ENCODE measurements at regions of chr11 and their contacts with region 1.

Region 1: DNA sequence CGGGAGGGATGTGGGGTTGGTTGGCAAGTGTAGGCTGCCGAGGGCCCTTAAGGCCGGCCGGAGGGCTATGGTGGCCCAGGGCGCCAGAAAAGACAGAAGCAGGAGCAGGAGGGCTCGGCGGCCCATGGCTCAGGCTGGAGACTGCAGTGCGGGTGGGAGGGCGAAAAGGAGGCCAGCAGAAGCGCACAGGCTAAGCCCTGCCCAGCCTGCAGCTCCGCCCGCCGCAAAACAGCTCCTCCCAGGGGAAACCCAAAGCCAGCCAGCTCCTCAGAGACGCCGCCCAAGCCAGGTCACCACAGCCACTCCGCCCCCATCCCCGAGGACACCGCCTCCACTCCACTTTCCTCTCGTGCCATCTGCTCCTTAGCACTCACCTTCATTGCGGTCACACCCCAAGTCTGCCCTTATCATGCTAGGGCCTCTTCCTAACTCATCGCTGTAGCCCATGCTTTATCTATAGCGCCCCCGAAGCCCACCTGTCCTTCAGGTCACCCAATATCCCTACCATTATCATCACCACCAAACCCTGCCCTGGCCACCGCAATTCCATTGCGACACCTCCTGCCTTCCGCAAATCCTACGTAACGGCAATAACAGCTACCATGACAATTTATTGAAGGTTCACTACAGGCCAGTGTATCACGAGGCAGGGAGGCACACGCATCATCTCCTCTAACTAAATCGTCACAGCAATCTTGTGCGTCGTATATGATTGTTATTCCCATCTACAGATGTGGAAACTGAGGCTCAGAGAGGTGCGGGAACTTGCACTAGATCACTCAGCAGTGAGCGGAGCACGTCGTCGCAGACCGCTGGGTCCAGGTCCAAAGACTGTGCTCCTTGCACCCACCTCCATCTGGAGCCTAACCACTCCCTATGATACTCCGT is at the start of gene PRCP:
- DNase-seq: peak; percentile 91 to 95
- ATAC-seq: peak; percentile 75 to 90 (median 79)
- H3K4me3 ChIP-seq: peak within 1 kb of the TSS; percentile 94
- H3K4me3 Mint-ChIP-seq: peak within 1 kb of the TSS; percentile 98
- H3K27ac ChIP-seq: peak within 1 kb of the TSS; percentile 99
- H3K27ac Mint-ChIP-seq: peak within 1 kb of the TSS; percentile 97 to 99
- H3K4me1 ChIP-seq: peaks cover 32% of the 10 kb centered on the region
- H3K4me1 Mint-ChIP-seq: peaks cover 50 to 59% of the 10 kb centered on the region in 2 donors
- H3K27me3 ChIP-seq: no peaks in the 10 kb centered on the region
- H3K27me3 Mint-ChIP-seq: no peaks in the 10 kb centered on the region
- CTCF ChIP-seq: no peak
- total RNA-seq, gene PRCP: 28.1 to 30.0 (median 30.0) TPM

Region 2: GRCh38 chr11:81920205-81920604 is 980.3 kb before region 1 on chr11:
- intact Hi-C with region 1: no loop called
- DNase-seq: no peak
- ATAC-seq: no peak
- H3K4me3 ChIP-seq: no peak overlapping the region
- H3K4me3 Mint-ChIP-seq: no peak overlapping the region
- H3K27ac ChIP-seq: no peak overlapping the region
- H3K27ac Mint-ChIP-seq: no peak overlapping the region
- H3K4me1 ChIP-seq: no peaks in the 10 kb centered on the region
- H3K4me1 Mint-ChIP-seq: no peaks in the 10 kb centered on the region
- H3K27me3 ChIP-seq: no peaks in the 10 kb centered on the region
- H3K27me3 Mint-ChIP-seq: peaks cover 0 to 11% of the 10 kb centered on the region in 2 donors
- CTCF ChIP-seq: no peak

Region 3: GRCh38 chr11:82867495-82868082 is 32.9 kb before region 1 on chr11:
- intact Hi-C with region 1: loop called (anchors 2 kb)
- DNase-seq: peak; percentile 55 to 88
- ATAC-seq: peak; percentile 74 to 77 (median 76)
- H3K4me3 ChIP-seq: no peak overlapping the region
- H3K4me3 Mint-ChIP-seq: peak overlapping the region; percentile 18
- H3K27ac ChIP-seq: no peak overlapping the region
- H3K27ac Mint-ChIP-seq: no peak overlapping the region
- H3K4me1 ChIP-seq: peaks cover 3% of the 10 kb centered on the region
- H3K4me1 Mint-ChIP-seq: peaks cover 8 to 10% of the 10 kb centered on the region in 2 donors
- H3K27me3 ChIP-seq: no peaks in the 10 kb centered on the region
- H3K27me3 Mint-ChIP-seq: no peaks in the 10 kb centered on the region
- CTCF ChIP-seq: peak; percentile 80

Region 4: DNA sequence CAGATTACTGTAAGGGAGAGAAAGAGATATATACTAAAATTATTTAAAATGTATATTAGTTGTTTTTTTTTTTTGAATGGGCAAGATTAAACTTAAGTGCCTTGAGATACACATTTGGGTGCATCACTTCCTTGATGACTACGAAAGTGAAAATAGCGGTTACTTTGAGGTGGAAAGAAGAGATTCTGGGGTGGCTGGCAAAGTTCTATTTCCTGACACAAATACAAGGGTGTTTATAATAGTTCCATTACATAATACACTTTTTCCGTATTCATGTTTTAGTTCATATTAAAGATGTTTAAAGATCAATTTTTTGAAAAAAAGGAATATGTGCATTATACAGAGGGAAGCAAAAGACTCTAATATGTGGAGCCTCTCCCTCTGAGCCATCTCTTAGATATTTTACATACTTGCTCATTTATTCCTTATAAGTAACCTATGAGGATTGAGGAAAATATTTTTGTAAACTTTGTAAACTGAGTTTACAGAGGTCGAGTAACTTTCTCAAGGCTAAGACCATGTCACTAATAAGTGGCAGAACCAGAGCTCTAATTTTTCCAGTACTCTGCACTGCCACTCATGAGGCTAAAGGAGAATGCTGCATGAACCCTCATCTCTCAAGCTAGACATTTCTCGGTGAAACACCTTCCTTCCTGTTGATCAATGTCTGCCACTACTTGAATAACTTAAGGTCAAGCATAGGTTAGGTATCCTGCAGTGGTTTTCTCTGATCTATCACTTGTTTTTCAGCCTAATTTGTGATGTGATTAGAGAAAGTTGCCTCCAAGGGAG is 59.7 kb after region 1 on chr11:
- intact Hi-C with region 1: loop called (anchors 2 kb)
- DNase-seq: peak in 1 of 2 donors; percentile 85
- ATAC-seq: peak; percentile 76 to 86 (median 86)
- H3K4me3 ChIP-seq: peak overlapping the region; percentile 2
- H3K4me3 Mint-ChIP-seq: peak overlapping the region; percentile 83
- H3K27ac ChIP-seq: peak overlapping the region; percentile 91
- H3K27ac Mint-ChIP-seq: peak overlapping the region; percentile 92 to 97
- H3K4me1 ChIP-seq: peaks cover 41% of the 10 kb centered on the region
- H3K4me1 Mint-ChIP-seq: peaks cover 62 to 71% of the 10 kb centered on the region in 2 donors
- H3K27me3 ChIP-seq: no peaks in the 10 kb centered on the region
- H3K27me3 Mint-ChIP-seq: no peaks in the 10 kb centered on the region
- CTCF ChIP-seq: no peak

Region 5: DNA sequence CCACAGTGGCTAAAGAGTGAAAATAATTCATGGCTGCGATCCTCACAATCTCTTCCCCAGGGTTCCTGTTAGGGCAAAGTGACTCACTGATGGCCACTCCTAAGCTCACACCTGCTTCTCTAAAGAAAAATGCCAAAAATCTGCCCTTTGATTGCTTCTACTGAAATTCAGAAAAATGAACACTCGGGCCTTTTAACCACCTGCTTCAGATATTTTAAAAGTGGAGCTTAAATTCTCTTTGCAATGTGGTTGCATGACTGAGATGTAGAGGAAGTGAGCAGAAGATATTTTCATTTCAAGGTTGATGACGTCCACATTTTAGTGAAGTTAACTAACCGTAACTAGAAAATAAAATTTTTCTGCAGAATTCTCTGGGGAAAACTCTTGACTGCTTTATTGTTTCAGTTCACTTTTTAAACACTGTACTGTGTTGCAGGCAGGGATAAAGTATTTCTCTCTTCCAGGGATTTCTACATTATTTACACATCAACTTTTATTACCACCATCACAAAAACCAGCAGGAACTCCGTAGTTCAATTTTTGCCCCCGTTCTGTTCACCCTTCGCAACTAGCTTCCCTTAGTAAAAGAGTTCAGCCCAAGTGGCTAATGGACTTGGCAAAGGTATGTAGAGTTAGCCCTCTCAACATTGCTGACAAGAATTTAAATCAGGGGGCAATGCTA is 162.7 kb after region 1 on chr11:
- intact Hi-C with region 1: no loop called
- DNase-seq: peak in 1 of 2 donors; percentile 57
- ATAC-seq: peak; percentile 60 to 74 (median 69)
- H3K4me3 ChIP-seq: no peak overlapping the region
- H3K4me3 Mint-ChIP-seq: peak overlapping the region; percentile 80
- H3K27ac ChIP-seq: peak overlapping the region; percentile 67
- H3K27ac Mint-ChIP-seq: peak overlapping the region; percentile 75 to 80
- H3K4me1 ChIP-seq: peaks cover 9% of the 10 kb centered on the region
- H3K4me1 Mint-ChIP-seq: peaks cover 9 to 10% of the 10 kb centered on the region in 2 donors
- H3K27me3 ChIP-seq: no peaks in the 10 kb centered on the region
- H3K27me3 Mint-ChIP-seq: peaks cover 0 to 1% of the 10 kb centered on the region in 2 donors
- CTCF ChIP-seq: no peak

Region 6: GRCh38 chr11:83285771-83286528 is 385.4 kb after region 1 on chr11 and contains the start of gene CCDC90B:
- intact Hi-C with region 1: loop called (anchors 1 kb)
- DNase-seq: peak; percentile 90 to 98
- ATAC-seq: peak; percentile 89 to 96 (median 89)
- H3K4me3 ChIP-seq: peak within 1 kb of the TSS; percentile 81
- H3K4me3 Mint-ChIP-seq: peak within 1 kb of the TSS; percentile 96
- H3K27ac ChIP-seq: peak within 1 kb of the TSS; percentile 97
- H3K27ac Mint-ChIP-seq: peak within 1 kb of the TSS; percentile 99 to 100
- H3K4me1 ChIP-seq: peaks cover 4% of the 10 kb centered on the region
- H3K4me1 Mint-ChIP-seq: peaks cover 21 to 26% of the 10 kb centered on the region in 2 donors
- H3K27me3 ChIP-seq: no peaks in the 10 kb centered on the region
- H3K27me3 Mint-ChIP-seq: peaks cover 0 to 8% of the 10 kb centered on the region in 2 donors
- CTCF ChIP-seq: no peak
- total RNA-seq, gene CCDC90B: 27.3 to 30.2 (median 29.5) TPM

Measured in natural killer cell (primary cell).